ENCODE measurements at regions of chr17 and their contacts with region 1.

Region 1: DNA sequence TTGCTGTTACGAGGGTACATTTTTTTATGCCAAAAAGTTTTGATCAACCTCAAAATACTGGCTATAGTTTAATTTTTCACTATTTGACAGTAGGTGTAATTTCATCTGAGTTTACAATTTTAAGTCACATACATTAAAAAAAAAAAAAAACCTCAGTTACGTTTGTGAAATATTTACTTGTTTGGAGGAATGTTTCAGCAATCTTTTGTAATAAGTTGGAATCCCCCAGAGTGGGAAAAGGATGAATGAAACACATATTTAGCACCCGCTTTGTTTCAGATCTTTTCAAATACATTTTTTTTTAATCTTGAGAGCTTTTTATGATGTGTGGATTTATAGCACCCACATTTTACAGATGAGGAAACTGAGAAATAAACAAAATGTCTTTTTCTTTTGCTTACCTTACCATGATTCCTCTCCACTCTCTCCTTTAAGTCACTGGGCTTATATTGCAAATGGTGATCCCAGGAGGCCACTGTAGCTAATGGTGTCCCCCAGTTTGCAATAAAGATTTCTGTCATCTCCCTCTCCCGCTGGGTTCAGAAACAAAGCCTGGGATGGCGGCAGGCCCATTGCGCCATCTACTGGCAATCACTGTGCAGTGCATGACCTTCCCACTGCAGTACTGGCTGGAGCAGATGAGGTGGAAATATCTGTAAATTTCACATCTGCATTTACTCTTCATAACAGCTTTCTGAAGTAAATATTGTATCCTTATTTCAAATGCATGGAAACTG is 27.7 kb downstream of the TBC1D3B start:
- DNase-seq: peak; percentile 85
- H3K4me3 Mint-ChIP-seq: no peak overlapping the region
- H3K27ac Mint-ChIP-seq: no peak overlapping the region
- H3K4me1 Mint-ChIP-seq: peaks cover 3% of the 10 kb centered on the region
- H3K27me3 Mint-ChIP-seq: peaks cover 23% of the 10 kb centered on the region

Region 2: DNA sequence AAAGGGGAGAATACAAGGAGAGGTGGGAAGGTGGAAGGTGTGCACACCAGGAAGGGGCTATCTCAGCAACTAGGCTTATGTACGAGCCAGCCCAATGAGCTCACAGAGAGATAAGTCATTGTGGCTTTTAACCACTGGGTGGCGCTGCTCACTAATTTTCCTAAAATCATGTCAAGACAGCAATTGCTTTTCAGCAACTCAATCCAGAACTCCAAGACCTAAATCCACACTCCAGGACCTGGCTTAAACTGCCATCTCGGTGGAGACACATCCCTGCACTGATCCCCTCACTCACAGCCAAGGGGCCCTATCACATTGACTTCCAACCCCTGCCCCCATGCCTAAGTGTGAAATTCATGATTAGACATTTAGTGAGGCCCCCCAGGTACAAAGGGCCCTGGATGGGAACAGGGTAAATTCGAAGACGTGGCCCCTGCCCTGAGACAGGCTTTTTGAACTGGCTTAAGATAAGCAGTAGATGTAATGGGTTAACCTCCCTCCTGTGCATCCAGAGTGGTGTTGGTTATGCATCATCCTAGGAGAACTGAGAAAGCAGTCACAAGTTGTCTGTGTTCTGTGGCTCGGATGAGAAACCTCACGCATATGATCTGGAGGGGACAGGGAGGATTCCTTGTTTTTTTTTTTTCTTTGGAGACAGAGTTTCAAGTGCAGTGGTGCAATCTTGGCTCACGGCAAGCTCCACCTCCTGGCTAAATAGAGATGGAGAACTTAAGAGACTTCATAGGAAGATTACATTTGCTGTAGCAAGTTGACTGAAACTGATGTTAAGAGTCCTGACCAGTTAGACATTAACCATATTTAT is 179.0 kb before region 1 on chr17:
- CTCF ChIA-PET with region 1: interaction called, 285 read pairs
- intact Hi-C with region 1: loop called (anchors 1 kb)
- DNase-seq: peak; percentile 90
- H3K4me3 Mint-ChIP-seq: no peak overlapping the region
- H3K27ac Mint-ChIP-seq: no peak overlapping the region
- H3K4me1 Mint-ChIP-seq: no peaks in the 10 kb centered on the region
- H3K27me3 Mint-ChIP-seq: peaks cover 2% of the 10 kb centered on the region

Region 3: DNA sequence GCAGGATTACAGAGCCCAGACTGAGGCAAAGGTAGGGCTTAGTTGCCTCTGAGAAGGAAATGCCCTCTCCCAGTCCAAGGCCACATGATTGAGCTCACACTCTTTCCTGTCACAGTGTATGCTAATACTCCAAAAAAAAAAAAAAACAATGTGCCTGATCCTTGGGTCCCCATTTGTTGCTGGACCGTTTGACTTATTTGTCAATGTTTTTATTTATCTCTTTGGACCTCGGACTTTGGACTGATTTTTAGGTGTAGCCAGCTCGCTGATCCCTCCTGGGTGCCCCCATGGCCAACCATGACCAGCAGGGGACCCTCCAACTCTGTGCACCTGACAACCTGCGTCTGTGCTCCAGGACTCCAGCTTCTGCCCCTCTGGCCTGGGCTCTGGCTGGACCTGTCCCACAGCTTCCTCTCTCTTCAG is 166.8 kb before region 1 on chr17:
- CTCF ChIA-PET with region 1: interaction called, 285 read pairs
- intact Hi-C with region 1: no loop called
- DNase-seq: peak; percentile 18
- H3K4me3 Mint-ChIP-seq: no peak overlapping the region
- H3K27ac Mint-ChIP-seq: no peak overlapping the region
- H3K4me1 Mint-ChIP-seq: no peaks in the 10 kb centered on the region
- H3K27me3 Mint-ChIP-seq: peaks cover 4% of the 10 kb centered on the region

Region 4: GRCh38 chr17:36072431-36073121 is 76.2 kb before region 1 on chr17:
- CTCF ChIA-PET with region 1: interaction called, 28 read pairs
- intact Hi-C with region 1: no loop called
- DNase-seq: peak; percentile 81
- H3K4me3 Mint-ChIP-seq: no peak overlapping the region
- H3K27ac Mint-ChIP-seq: no peak overlapping the region
- H3K4me1 Mint-ChIP-seq: peaks cover 5% of the 10 kb centered on the region
- H3K27me3 Mint-ChIP-seq: peaks cover 8% of the 10 kb centered on the region

Region 5: GRCh38 chr17:36104701-36105181 is 44.0 kb before region 1 on chr17:
- CTCF ChIA-PET with region 1: no interaction called
- intact Hi-C with region 1: no loop called
- DNase-seq: no peak
- H3K4me3 Mint-ChIP-seq: peak overlapping the region; percentile 22
- H3K27ac Mint-ChIP-seq: no peak overlapping the region
- H3K4me1 Mint-ChIP-seq: peaks cover 4% of the 10 kb centered on the region
- H3K27me3 Mint-ChIP-seq: peaks cover 34% of the 10 kb centered on the region

Region 6: DNA sequence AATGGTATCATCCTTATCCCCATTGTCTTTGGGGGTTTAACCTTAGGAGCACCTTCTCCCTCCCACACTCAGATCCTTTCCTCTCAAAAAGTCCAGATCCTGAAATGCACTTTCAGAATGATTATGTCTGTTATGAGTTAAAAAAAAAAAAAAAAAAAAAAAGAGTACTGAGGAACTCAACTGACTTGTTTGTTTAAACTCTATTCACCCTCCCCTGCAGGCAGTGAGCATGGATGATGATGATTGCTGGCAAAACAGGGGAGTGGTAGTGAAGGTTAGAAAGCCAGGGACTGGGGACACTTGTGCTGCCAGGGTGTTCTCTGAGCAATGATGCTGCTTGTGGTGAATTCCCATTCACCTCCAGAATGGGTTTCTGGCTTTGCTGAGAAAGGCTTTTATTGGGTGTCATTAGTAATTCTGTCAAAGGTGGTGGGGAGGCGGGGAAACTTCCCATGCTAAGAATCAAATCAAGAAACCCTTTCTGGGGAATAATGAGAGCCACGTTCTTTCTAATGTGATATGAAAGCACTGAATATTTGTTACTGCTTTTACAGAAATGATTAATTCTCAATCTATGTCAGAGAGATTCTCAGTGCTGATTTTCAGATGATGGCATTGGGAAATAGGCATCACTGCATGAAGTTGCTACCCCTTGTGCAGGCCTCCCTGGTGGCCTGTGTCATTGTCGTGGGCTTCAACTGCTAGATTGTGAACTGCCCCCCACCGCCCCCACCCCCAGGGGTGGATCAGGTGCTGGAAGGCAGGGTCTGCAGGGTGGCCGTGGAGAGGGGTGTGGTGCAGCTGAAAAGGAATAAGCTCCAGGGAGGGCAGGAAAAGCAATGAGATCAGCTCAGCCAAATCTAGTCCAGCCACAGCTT is 31.0 kb before region 1 on chr17:
- CTCF ChIA-PET with region 1: interaction called, 15 read pairs
- intact Hi-C with region 1: no loop called
- DNase-seq: peak; percentile 73
- H3K4me3 Mint-ChIP-seq: no peak overlapping the region
- H3K27ac Mint-ChIP-seq: no peak overlapping the region
- H3K4me1 Mint-ChIP-seq: peaks cover 22% of the 10 kb centered on the region
- H3K27me3 Mint-ChIP-seq: peaks cover 29% of the 10 kb centered on the region

Region 7: DNA sequence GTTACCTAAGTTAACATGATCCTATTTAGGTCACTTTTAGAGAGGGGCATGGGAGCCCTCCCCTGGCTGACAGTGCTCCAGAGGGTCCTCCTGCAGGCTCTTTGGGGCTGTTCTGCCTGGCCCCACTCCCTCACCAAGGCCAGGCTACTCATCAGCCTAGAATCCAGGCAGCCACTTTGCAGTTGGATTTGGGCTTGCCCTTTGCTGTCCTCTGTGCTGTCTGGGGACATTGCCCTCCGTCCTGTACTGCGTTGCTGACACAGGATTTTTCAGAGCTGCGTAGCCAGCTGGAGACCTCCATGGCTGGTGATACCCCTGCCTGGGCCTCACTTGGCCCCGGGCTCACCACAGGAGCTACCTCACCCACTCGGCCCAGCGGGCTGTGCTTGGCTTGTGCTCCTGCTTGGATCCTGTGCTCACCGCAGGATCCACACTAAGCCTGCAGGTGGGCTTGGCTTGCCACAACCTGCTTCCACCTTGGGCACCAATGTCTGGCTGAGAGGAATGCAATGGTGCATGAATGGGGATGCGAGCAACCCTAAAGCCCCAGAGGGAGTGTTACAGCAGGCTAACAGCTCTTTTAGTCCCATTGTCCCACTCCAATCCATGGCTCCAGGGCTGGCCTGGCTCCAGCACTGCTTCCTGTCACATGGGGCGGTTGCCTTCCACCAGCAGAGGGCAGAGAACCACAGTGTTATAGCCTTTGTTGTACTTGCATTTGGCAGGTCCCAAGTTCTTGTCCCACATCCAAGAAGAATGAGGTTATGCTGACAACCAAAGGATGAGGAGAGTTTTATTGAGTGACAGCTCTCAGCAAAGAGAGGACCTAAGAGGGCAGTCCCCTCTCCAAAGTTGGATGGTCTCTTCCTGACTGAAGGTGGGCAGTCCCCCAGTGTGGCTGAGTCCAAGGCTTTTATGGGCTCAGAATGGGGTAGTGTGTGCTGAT is 23.6 kb before region 1 on chr17:
- CTCF ChIA-PET with region 1: interaction called, 15 read pairs
- intact Hi-C with region 1: no loop called
- DNase-seq: no peak
- H3K4me3 Mint-ChIP-seq: no peak overlapping the region
- H3K27ac Mint-ChIP-seq: no peak overlapping the region
- H3K4me1 Mint-ChIP-seq: no peaks in the 10 kb centered on the region
- H3K27me3 Mint-ChIP-seq: peaks cover 37% of the 10 kb centered on the region

Region 8: DNA sequence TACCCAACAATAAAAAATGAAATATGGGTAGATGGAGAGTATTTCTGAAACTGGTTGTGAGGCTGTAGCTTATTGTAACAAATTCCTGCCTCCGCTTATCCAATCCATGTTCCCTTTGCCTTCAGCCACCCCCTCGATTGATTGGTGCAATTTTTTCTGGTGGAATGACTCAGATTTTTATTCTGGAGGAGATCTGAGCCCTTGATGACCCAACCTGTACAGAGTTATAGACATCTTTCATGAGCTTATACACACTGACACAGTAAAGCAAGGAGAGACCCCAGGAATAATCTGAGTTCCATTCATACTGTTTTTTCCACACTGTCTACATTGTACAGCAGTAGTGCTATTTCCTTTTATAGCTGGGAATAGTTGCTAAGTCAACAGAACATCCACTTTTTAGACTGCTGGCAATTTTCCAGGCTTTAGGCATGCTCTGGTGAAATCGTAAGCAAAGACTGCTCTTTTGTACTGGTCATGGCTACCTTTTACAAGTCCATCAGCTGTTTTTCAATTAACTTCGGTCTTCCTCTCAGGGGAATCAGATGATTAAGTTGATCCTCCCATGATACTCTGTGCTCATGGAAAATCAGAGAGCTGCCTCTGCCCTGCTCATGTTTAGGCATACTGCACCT is 15.0 kb before region 1 on chr17:
- CTCF ChIA-PET with region 1: interaction called, 42 read pairs
- intact Hi-C with region 1: no loop called
- DNase-seq: no peak
- H3K4me3 Mint-ChIP-seq: no peak overlapping the region
- H3K27ac Mint-ChIP-seq: no peak overlapping the region
- H3K4me1 Mint-ChIP-seq: no peaks in the 10 kb centered on the region
- H3K27me3 Mint-ChIP-seq: peaks cover 37% of the 10 kb centered on the region

Region 9: DNA sequence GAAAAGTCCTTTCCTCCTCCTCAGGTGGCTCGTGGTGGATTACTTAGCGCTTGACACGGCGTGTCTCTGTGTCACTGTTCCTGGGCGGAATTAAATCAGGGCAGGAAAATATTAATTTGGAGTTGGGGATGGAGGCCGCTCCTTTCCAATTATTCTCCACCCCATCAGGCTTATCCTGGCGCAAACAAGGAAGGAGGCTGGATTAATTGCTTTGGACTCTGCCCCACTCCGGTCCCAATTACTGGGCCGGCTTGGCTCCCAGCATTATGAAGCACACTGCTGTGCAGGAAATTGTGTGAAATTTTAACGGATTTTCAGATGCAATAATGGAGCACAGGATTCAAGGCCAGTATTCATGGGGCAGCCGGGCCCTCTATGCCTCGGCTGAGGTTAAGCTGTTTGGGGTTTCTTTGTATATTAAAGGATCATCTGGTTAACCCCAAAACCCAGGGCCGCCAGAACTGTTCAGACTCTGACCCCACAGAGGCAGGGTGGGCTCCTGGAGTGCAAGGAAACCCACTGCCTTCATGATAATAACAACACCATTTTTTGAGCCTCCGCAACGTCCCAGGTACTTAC is 540.5 kb after region 1 on chr17:
- CTCF ChIA-PET with region 1: no interaction called
- intact Hi-C with region 1: no loop called
- DNase-seq: no peak
- H3K4me3 Mint-ChIP-seq: no peak overlapping the region
- H3K27ac Mint-ChIP-seq: no peak overlapping the region
- H3K4me1 Mint-ChIP-seq: no peaks in the 10 kb centered on the region
- H3K27me3 Mint-ChIP-seq: peaks cover 1% of the 10 kb centered on the region